Naive thymus-derived CD4-positive, alpha-beta T cell (primary cell): ENCODE measurements at regions of chr3 and their contacts with region 1.

Region 1: GRCh38 chr3:101936419-101937356 is 87.4 kb downstream of the NFKBIZ start:
- DNase-seq: peak in 8 of 9 donors; percentile 34 to 68 (median 58)
- ATAC-seq: peak; percentile 90
- H3K4me3 ChIP-seq: peak overlapping the region; percentile 9
- H3K4me3 Mint-ChIP-seq: peak overlapping the region in 9 of 10 donors; percentile 44 to 77 (median 72)
- H3K27ac ChIP-seq: no peak overlapping the region
- H3K27ac Mint-ChIP-seq: peak overlapping the region; percentile 76 to 91 (median 87)
- H3K4me1 ChIP-seq: peaks cover 28 to 56% of the 10 kb centered on the region in 2 donors
- H3K4me1 Mint-ChIP-seq: peaks cover 15 to 43% (median 30%) of the 10 kb centered on the region in 7 donors
- H3K27me3 ChIP-seq: no peaks in the 10 kb centered on the region
- H3K27me3 Mint-ChIP-seq: peaks cover 0 to 27% (median 0%) of the 10 kb centered on the region in 5 donors

Region 2: DNA sequence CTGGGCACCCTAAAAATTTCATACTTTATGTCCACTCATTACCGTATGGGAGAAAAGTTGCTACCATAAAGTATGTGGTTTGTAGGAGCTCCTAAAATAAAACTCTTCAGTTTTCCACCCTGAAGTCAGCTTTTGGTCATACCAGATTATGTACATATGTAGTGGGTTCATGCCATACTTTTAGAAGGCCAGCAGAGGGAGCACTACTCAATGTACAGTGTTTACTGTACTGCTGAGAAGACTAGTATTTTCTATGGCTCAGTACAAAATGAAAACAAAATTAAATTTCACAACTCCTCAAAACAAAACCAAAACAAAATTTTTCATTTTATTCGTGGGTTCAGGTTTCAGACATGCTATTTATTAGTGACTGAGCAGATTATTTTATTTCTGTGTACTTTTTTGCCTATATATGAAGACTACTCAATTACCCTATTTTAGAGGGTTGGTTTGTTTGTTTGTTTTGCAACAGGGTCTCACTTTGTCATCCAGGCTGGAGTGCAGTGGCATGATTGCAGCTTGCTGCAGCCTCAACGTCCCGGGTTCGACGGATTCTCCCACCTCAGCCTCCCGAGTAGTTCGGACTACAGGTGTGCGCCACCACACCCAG is 133.4 kb before region 1 on chr3:
- CTCF ChIA-PET with region 1: no interaction called
- POLR2A ChIA-PET with region 1: no interaction called
- intact Hi-C with region 1: loop called in 1 of 2 experiments (anchors 5 kb)
- DNase-seq: peak in 7 of 9 donors; percentile 59 to 78 (median 69)
- ATAC-seq: peak; percentile 100
- H3K4me3 ChIP-seq: no peak overlapping the region
- H3K4me3 Mint-ChIP-seq: peak overlapping the region in 6 of 10 donors; percentile 14 to 58 (median 29)
- H3K27ac ChIP-seq: peak overlapping the region; percentile 29
- H3K27ac Mint-ChIP-seq: peak overlapping the region; percentile 53 to 95 (median 68)
- H3K4me1 ChIP-seq: peaks cover 0 to 6% of the 10 kb centered on the region in 2 donors
- H3K4me1 Mint-ChIP-seq: peaks cover 10 to 67% (median 55%) of the 10 kb centered on the region in 7 donors
- H3K27me3 ChIP-seq: no peaks in the 10 kb centered on the region
- H3K27me3 Mint-ChIP-seq: no peaks in the 10 kb centered on the region

Region 3: DNA sequence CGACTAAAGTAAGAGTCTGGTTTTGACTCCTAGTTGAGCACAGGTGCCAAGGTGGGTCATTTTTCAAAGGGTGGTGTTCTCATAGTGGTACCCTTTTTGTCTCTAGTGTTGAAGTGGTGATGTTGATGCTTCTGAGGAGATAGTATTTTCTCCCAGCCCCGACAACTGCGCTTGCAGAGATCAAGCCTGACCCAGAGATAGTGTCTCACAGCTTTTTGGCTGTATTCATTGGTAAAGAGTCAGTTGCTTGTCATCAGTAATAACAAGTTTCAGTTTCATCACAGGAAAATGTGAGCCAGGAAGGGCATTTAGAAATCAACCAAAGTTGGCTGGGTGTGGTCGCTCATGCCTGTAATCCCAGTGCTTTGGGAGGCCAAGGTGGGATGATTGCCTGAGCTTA is 51.9 kb after region 1 on chr3:
- CTCF ChIA-PET with region 1: no interaction called
- POLR2A ChIA-PET with region 1: no interaction called
- intact Hi-C with region 1: loop called in 1 of 2 experiments (anchors 2 kb)
- DNase-seq: no peak
- ATAC-seq: no peak
- H3K4me3 ChIP-seq: no peak overlapping the region
- H3K4me3 Mint-ChIP-seq: peak overlapping the region in 1 of 10 donors; percentile 15
- H3K27ac ChIP-seq: no peak overlapping the region
- H3K27ac Mint-ChIP-seq: peak overlapping the region in 1 of 9 donors; percentile 62
- H3K4me1 ChIP-seq: peaks cover 0 to 6% of the 10 kb centered on the region in 2 donors
- H3K4me1 Mint-ChIP-seq: peaks cover 4 to 32% (median 16%) of the 10 kb centered on the region in 7 donors
- H3K27me3 ChIP-seq: no peaks in the 10 kb centered on the region
- H3K27me3 Mint-ChIP-seq: peaks cover 0 to 20% (median 0%) of the 10 kb centered on the region in 5 donors

Region 4: GRCh38 chr3:102078854-102079253 is 142.2 kb after region 1 on chr3:
- CTCF ChIA-PET with region 1: no interaction called
- POLR2A ChIA-PET with region 1: interaction called, 6 read pairs
- intact Hi-C with region 1: loop called in 1 of 2 experiments (anchors 5 kb)
- DNase-seq: peak in 6 of 9 donors; percentile 36 to 64 (median 50)
- ATAC-seq: peak; percentile 72
- H3K4me3 ChIP-seq: peak overlapping the region; percentile 27
- H3K4me3 Mint-ChIP-seq: peak overlapping the region; percentile 47 to 82 (median 70)
- H3K27ac ChIP-seq: peak overlapping the region; percentile 74
- H3K27ac Mint-ChIP-seq: peak overlapping the region; percentile 85 to 99 (median 97)
- H3K4me1 ChIP-seq: peaks cover 0 to 44% of the 10 kb centered on the region in 2 donors
- H3K4me1 Mint-ChIP-seq: peaks cover 16 to 84% (median 72%) of the 10 kb centered on the region in 7 donors
- H3K27me3 ChIP-seq: no peaks in the 10 kb centered on the region
- H3K27me3 Mint-ChIP-seq: peaks cover 0 to 4% (median 0%) of the 10 kb centered on the region in 5 donors

Region 5: GRCh38 chr3:102180291-102181039 is 243.8 kb after region 1 on chr3:
- CTCF ChIA-PET with region 1: no interaction called
- POLR2A ChIA-PET with region 1: no interaction called
- intact Hi-C with region 1: loop called in 1 of 2 experiments (anchors 2 kb)
- DNase-seq: peak in 6 of 9 donors; percentile 21 to 52 (median 40)
- ATAC-seq: peak; percentile 68
- H3K4me3 ChIP-seq: no peak overlapping the region
- H3K4me3 Mint-ChIP-seq: no peak overlapping the region
- H3K27ac ChIP-seq: peak overlapping the region; percentile 73
- H3K27ac Mint-ChIP-seq: no peak overlapping the region
- H3K4me1 ChIP-seq: peaks cover 0 to 18% of the 10 kb centered on the region in 2 donors
- H3K4me1 Mint-ChIP-seq: peaks cover 0 to 12% (median 5%) of the 10 kb centered on the region in 7 donors
- H3K27me3 ChIP-seq: no peaks in the 10 kb centered on the region
- H3K27me3 Mint-ChIP-seq: no peaks in the 10 kb centered on the region

Region 6: DNA sequence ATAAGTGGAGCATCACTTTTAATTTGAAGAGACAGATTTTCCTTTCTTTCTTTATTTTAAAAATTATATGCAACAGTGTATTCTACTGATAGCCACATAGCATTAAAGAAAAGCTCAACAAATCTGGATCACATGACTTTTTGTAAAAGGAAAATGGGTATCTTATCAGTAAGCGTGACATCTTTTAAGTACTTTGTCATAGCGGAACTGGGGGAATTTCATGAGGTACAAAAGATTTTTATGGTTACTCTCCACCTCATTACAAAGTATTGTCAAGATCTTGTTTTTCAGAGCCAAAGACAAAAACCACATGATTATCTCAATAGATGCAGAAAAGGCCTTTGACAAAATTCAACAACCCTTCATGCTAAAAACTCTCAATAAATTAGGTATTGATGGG is 278.5 kb after region 1 on chr3:
- CTCF ChIA-PET with region 1: no interaction called
- POLR2A ChIA-PET with region 1: no interaction called
- intact Hi-C with region 1: no loop called
- DNase-seq: no peak
- ATAC-seq: no peak
- H3K4me3 ChIP-seq: no peak overlapping the region
- H3K4me3 Mint-ChIP-seq: no peak overlapping the region
- H3K27ac ChIP-seq: no peak overlapping the region
- H3K27ac Mint-ChIP-seq: no peak overlapping the region
- H3K4me1 ChIP-seq: no peaks in the 10 kb centered on the region
- H3K4me1 Mint-ChIP-seq: peaks cover 0 to 5% (median 0%) of the 10 kb centered on the region in 7 donors
- H3K27me3 ChIP-seq: no peaks in the 10 kb centered on the region
- H3K27me3 Mint-ChIP-seq: peaks cover 0 to 2% (median 0%) of the 10 kb centered on the region in 5 donors